ENCODE measurements at regions of chrX and their contacts with region 1.

Region 1: GRCh38 chrX:13506574-13506973 is 62.8 kb upstream of the EGFL6 start:
- DNase-seq: peak; percentile 61
- ATAC-seq: no peak
- H3K4me3 Mint-ChIP-seq: no peak overlapping the region
- H3K27ac Mint-ChIP-seq: no peak overlapping the region
- H3K4me1 Mint-ChIP-seq: peaks cover 8% of the 10 kb centered on the region
- H3K27me3 Mint-ChIP-seq: no peaks in the 10 kb centered on the region

Region 2: GRCh38 chrX:13373807-13374187 is 132.8 kb before region 1 on chrX:
- CTCF ChIA-PET with region 1: no interaction called
- POLR2A ChIA-PET with region 1: no interaction called
- DNase-seq: no peak
- ATAC-seq: no peak
- H3K4me3 Mint-ChIP-seq: no peak overlapping the region
- H3K27ac Mint-ChIP-seq: no peak overlapping the region
- H3K4me1 Mint-ChIP-seq: no peaks in the 10 kb centered on the region
- H3K27me3 Mint-ChIP-seq: peaks cover 2% of the 10 kb centered on the region

Region 3: GRCh38 chrX:13646154-13646549 is 139.6 kb after region 1 on chrX:
- CTCF ChIA-PET with region 1: interaction called, 50 read pairs
- POLR2A ChIA-PET with region 1: no interaction called
- DNase-seq: peak; percentile 55
- ATAC-seq: no peak
- H3K4me3 Mint-ChIP-seq: no peak overlapping the region
- H3K27ac Mint-ChIP-seq: no peak overlapping the region
- H3K4me1 Mint-ChIP-seq: peaks cover 8% of the 10 kb centered on the region
- H3K27me3 Mint-ChIP-seq: no peaks in the 10 kb centered on the region

Region 4: GRCh38 chrX:14032406-14032805 is 525.8 kb after region 1 on chrX:
- CTCF ChIA-PET with region 1: interaction called, 20 read pairs
- POLR2A ChIA-PET with region 1: no interaction called
- DNase-seq: peak; percentile 66
- ATAC-seq: no peak
- H3K4me3 Mint-ChIP-seq: no peak overlapping the region
- H3K27ac Mint-ChIP-seq: peak overlapping the region; percentile 49
- H3K4me1 Mint-ChIP-seq: peaks cover 32% of the 10 kb centered on the region
- H3K27me3 Mint-ChIP-seq: peaks cover 9% of the 10 kb centered on the region